H1 (cell line): ENCODE measurements at regions of chr7 and their contacts with region 1.

Region 1: GRCh38 chr7:142153400-142153799 is 41.9 kb downstream of the MGAM2 start:
- DNase-seq: no peak
- H3K4me3 ChIP-seq: no peak overlapping the region
- H3K27ac ChIP-seq: no peak overlapping the region
- H3K4me1 ChIP-seq: no peaks in the 10 kb centered on the region
- H3K27me3 ChIP-seq: peaks cover 0 to 1% (median 0%) of the 10 kb centered on the region in 4 experiments; a peak in 1 of 7 replicates
- CTCF ChIP-seq: peak; percentile 29 to 41 (median 30); a peak in 3 of 4 replicates
- EP300 ChIP-seq: no peak
- POLR2A ChIP-seq: no peak
- RAD21 ChIP-seq: peak; percentile 34 to 53

Region 2: DNA sequence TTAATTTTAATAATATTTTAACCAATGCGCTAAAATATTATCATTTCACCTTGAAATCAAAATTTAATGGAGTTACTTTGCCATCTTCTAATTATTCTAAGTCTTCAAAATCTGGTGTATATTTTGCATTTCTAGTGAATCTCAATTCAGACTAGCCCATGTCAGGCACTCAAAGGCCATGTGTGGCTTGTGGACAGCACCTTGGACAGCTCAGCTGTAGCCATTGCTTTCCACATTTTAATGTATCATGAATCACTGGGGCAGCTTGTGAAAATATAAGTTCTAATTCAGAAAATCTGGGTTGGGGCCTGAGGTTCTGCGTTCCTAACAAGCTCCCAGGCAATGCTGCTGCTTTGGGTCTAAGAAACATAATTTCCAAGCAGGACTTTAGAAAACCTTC is 15.3 kb after region 1 on chr7:
- CTCF ChIA-PET with region 1: interaction called, 14 read pairs
- POLR2A ChIA-PET with region 1: no interaction called
- DNase-seq: no peak
- H3K4me3 ChIP-seq: no peak overlapping the region
- H3K27ac ChIP-seq: no peak overlapping the region
- H3K4me1 ChIP-seq: no peaks in the 10 kb centered on the region
- H3K27me3 ChIP-seq: no peaks in the 10 kb centered on the region
- CTCF ChIP-seq: no peak
- EP300 ChIP-seq: no peak
- POLR2A ChIP-seq: no peak
- RAD21 ChIP-seq: no peak